Sigmoid colon (tissue), 7 donors: ENCODE measurements at regions of chr16 and their contacts with region 1.

Region 1: GRCh38 chr16:75351183-75351582 is 82.1 kb downstream of the CFDP1 start:
- DNase-seq: no peak
- H3K4me3 ChIP-seq: no peak overlapping the region
- H3K27ac ChIP-seq: no peak overlapping the region
- H3K4me1 ChIP-seq: no peaks in the 10 kb centered on the region
- H3K27me3 ChIP-seq: no peaks in the 10 kb centered on the region
- CTCF ChIP-seq: no peak
- EP300 ChIP-seq: no peak
- POLR2A ChIP-seq: no peak

Region 2: GRCh38 chr16:74623214-74623842 is 727.9 kb before region 1 on chr16:
- intact Hi-C with region 1: no loop called
- DNase-seq: no peak
- H3K4me3 ChIP-seq: no peak overlapping the region
- H3K27ac ChIP-seq: no peak overlapping the region
- H3K4me1 ChIP-seq: no peaks in the 10 kb centered on the region
- H3K27me3 ChIP-seq: no peaks in the 10 kb centered on the region
- CTCF ChIP-seq: peak in 3 of 4 experiments; percentile 51 to 58 (median 57)
- EP300 ChIP-seq: no peak
- POLR2A ChIP-seq: no peak

Region 3: DNA sequence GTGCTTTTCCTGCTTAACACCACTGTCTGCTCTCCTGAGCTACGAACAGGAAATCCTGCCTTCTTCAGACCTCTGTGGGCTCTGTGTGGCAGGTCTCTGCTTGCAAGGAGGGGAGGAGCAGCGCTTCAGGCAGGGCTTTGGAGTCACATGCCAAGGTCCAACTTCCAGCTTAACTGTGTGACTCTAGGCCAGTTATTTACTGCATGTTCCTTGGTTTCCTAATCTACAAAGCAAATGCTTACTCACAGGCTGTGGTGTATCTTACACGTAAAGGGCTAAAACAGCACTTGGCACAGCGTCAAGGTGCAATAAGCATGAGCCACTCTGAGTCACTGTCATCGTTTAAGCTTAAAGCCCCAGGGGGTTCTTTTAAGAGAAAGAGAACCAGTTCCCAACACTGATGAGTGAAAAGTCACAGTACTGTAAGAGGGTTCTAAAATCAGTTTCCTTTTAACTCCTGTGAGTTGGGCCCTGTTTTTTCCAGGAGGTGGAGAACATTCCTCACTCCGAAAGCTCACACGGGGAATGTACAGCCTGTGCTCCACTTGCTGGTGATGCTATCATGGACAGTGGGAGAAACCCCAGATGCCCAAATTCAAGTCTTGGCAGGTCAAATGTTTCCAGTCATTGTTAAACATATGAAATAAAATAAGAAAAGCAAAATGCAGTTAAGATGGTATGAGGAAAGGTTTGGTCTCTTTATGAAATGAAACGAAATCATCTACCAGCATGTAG is 45.7 kb before region 1 on chr16:
- intact Hi-C with region 1: loop called (anchors 5 kb)
- DNase-seq: peak; percentile 90
- H3K4me3 ChIP-seq: no peak overlapping the region
- H3K27ac ChIP-seq: peak overlapping the region; percentile 77 to 86 (median 80)
- H3K4me1 ChIP-seq: peaks cover 0 to 28% (median 24%) of the 10 kb centered on the region in 4 donors
- H3K27me3 ChIP-seq: no peaks in the 10 kb centered on the region
- CTCF ChIP-seq: no peak
- EP300 ChIP-seq: peak in 2 of 4 donors; percentile 58 to 59
- POLR2A ChIP-seq: no peak